Naive thymus-derived CD4-positive, alpha-beta T cell (primary cell): ENCODE measurements at regions of chr7 and their contacts with region 1.

Region 1: DNA sequence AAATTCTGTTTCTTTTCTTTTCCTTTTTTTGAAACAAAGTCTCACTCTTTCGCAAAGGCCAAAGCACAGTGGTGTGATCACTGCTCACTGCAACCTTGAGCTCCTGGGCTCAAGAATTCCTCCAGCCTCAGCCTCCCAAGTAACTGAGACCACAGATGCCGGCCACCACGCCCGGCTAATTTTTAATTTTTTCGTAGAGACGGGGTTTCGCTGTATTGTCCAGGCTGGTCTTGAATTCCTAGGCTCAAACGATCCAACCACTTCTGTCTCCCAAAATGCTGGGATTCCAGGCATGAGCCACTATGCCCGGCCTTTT is 25.7 kb upstream of the TRIM56 start:
- DNase-seq: no peak
- ATAC-seq: no peak
- H3K4me3 ChIP-seq: no peak overlapping the region
- H3K4me3 Mint-ChIP-seq: no peak overlapping the region
- H3K27ac ChIP-seq: no peak overlapping the region
- H3K27ac Mint-ChIP-seq: peak overlapping the region in 2 of 9 donors; percentile 11 to 52
- H3K4me1 ChIP-seq: no peaks in the 10 kb centered on the region
- H3K4me1 Mint-ChIP-seq: peaks cover 0 to 5% (median 0%) of the 10 kb centered on the region in 7 donors
- H3K27me3 ChIP-seq: no peaks in the 10 kb centered on the region
- H3K27me3 Mint-ChIP-seq: peaks cover 35 to 69% (median 62%) of the 10 kb centered on the region in 5 donors

Region 2: GRCh38 chr7:100799014-100799896 is 260.3 kb before region 1 on chr7:
- CTCF ChIA-PET with region 1: interaction called, 5 read pairs
- POLR2A ChIA-PET with region 1: no interaction called
- intact Hi-C with region 1: loop called in 1 of 2 experiments (anchors 1 kb)
- DNase-seq: peak in 8 of 9 donors; percentile 6 to 45 (median 36)
- ATAC-seq: peak; percentile 49
- H3K4me3 ChIP-seq: no peak overlapping the region
- H3K4me3 Mint-ChIP-seq: no peak overlapping the region
- H3K27ac ChIP-seq: no peak overlapping the region
- H3K27ac Mint-ChIP-seq: no peak overlapping the region
- H3K4me1 ChIP-seq: no peaks in the 10 kb centered on the region
- H3K4me1 Mint-ChIP-seq: peaks cover 0 to 17% (median 5%) of the 10 kb centered on the region in 7 donors
- H3K27me3 ChIP-seq: no peaks in the 10 kb centered on the region
- H3K27me3 Mint-ChIP-seq: peaks cover 2 to 30% (median 8%) of the 10 kb centered on the region in 5 donors

Region 3: DNA sequence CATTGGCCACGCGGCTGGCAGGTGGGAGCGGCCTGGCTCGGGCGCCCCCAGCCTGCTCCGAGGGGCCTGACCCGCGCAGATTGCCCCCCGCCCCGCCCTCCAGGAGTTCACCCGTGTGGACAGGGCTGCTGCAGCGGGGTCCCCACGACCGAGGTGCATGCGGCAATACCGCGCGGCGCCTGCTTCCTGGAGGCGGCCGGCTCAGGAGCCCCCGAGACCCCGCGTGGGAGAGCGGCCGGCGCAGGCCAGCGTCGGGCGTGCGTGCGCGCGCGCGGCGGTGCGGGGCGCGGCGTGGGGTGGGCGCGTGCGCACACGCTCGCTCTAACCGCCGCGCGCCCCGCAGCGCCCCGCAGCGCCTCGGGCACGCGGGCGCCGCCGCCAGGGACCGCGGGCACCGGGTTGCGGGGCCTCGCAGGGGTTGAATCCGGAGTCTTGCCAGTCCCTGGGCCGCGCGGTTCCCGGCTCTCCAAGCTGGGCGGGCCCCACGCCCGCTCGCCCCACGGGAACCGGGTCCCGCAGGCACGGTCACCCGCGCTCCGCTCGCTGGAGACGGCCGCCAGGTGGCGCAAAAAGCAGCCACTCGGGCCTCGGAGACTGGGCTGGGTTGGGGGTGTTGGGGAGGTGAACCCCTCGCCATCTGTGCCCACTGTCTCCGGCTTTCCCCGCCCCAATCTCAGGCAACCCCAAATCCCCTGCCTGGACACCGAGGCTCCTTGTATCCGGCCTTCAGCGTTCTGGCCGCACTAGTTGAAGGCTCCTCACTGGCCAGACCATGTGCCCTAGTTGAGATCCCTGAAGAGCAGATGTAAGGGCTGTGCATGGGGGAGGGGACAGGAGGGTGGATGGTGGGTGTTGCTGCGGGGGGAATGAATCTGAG is 162.6 kb before region 1 on chr7:
- CTCF ChIA-PET with region 1: interaction called, 7 read pairs
- POLR2A ChIA-PET with region 1: no interaction called
- intact Hi-C with region 1: loop called (anchors 1 kb)
- DNase-seq: peak in 8 of 9 donors; percentile 36 to 74 (median 52)
- ATAC-seq: peak; percentile 69
- H3K4me3 ChIP-seq: peak overlapping the region; percentile 28
- H3K4me3 Mint-ChIP-seq: peak overlapping the region; percentile 45 to 95 (median 82)
- H3K27ac ChIP-seq: no peak overlapping the region
- H3K27ac Mint-ChIP-seq: no peak overlapping the region
- H3K4me1 ChIP-seq: peaks cover 8 to 11% of the 10 kb centered on the region in 2 donors
- H3K4me1 Mint-ChIP-seq: peaks cover 0 to 13% (median 7%) of the 10 kb centered on the region in 7 donors
- H3K27me3 ChIP-seq: peaks cover 8 to 10% of the 10 kb centered on the region in 2 donors
- H3K27me3 Mint-ChIP-seq: peaks cover 39 to 51% (median 43%) of the 10 kb centered on the region in 5 donors

Region 4: DNA sequence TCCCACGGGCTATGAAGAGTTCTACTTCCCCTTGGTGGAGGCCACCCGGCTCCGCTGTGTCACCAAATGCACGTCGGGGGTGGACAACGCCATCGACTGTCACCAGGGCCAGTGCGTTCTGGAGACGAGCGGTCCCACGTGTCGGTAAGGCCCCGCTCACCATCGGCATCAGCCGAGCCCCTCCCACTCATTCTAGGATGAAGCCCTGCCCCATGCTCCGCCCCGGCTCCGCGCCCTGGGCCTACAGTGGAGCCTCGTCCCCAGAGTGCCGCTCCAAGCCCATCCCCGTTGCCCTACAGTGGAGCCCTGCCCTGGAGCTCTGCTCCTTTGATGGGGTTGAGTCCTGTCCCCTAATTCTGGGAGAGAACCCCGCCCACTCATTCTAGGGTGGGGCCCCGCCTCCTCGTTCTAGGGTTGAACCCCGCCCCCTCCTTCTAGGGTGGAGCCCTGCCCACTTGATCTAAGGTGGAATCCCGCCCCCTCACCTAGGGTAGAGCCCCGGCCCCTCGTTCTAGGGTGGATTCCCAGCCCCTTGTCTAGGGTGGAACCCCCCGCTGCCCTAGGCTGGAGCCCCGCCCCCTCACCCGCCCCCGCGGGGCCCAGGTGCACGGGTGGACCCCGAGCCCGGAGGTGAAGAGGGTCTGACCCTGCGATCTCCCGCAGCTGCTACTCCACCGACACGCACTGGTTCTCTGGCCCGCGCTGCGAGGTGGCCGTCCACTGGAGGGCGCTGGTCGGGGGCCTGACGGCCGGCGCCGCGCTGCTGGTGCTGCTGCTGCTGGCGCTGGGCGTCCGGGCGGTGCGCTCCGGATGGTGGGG is 93.7 kb before region 1 on chr7:
- CTCF ChIA-PET with region 1: no interaction called
- POLR2A ChIA-PET with region 1: no interaction called
- intact Hi-C with region 1: loop called (anchors 1 kb)
- DNase-seq: peak; percentile 21 to 88 (median 52)
- ATAC-seq: peak; percentile 73
- H3K4me3 ChIP-seq: peak overlapping the region; percentile 52
- H3K4me3 Mint-ChIP-seq: peak overlapping the region; percentile 71 to 89 (median 84)
- H3K27ac ChIP-seq: no peak overlapping the region
- H3K27ac Mint-ChIP-seq: peak overlapping the region in 1 of 9 donors; percentile 6
- H3K4me1 ChIP-seq: peaks cover 0 to 17% of the 10 kb centered on the region in 2 donors
- H3K4me1 Mint-ChIP-seq: peaks cover 9 to 24% (median 16%) of the 10 kb centered on the region in 7 donors
- H3K27me3 ChIP-seq: peaks cover 12 to 33% of the 10 kb centered on the region in 2 donors
- H3K27me3 Mint-ChIP-seq: peaks cover 42 to 65% (median 61%) of the 10 kb centered on the region in 5 donors

Region 5: DNA sequence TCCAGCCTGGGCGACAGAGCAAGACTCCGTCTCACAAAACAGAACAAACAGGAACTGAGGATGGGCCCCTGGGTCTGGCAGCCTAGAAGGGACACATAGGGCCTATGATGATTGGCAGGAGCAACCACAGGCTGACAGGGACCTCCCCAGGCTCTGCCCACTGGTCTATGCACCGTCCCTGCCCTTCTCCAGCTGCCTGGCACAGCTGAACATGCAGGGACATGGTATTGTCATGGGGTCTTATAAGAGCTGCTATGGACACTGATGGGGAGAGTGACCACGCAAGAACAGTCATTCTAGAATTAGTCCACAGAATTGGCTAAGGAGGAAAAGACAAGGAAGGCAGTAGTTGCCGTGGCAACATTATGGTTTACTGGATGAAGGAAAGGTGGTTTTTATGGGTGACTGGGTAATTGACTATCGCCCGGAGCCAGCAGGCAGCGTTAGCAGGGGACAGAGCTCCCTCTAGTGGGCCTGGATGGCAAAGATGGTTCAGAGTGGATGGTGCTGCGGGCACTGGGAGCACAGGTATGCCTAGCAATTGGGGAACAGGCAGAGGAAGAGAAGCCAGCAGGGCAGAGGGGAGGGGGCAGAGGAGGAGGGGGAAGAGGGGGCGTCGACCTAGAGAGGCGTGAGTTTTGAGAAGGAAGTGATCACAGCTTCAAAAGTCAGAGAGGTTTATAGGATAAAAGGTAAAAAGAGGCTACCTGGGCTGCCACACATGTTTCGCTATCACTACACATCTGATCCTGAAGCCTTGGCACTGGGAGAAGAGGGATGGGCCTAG is 17.9 kb after region 1 on chr7:
- CTCF ChIA-PET with region 1: interaction called, 4 read pairs
- POLR2A ChIA-PET with region 1: no interaction called
- intact Hi-C with region 1: loop called in 1 of 2 experiments (anchors 1 kb)
- DNase-seq: peak; percentile 66 to 83 (median 78)
- ATAC-seq: peak; percentile 99
- H3K4me3 ChIP-seq: no peak overlapping the region
- H3K4me3 Mint-ChIP-seq: peak overlapping the region in 1 of 10 donors; percentile 5
- H3K27ac ChIP-seq: no peak overlapping the region
- H3K27ac Mint-ChIP-seq: peak overlapping the region in 1 of 9 donors; percentile 4
- H3K4me1 ChIP-seq: no peaks in the 10 kb centered on the region
- H3K4me1 Mint-ChIP-seq: peaks cover 0 to 9% (median 6%) of the 10 kb centered on the region in 7 donors
- H3K27me3 ChIP-seq: no peaks in the 10 kb centered on the region
- H3K27me3 Mint-ChIP-seq: peaks cover 0 to 26% (median 7%) of the 10 kb centered on the region in 5 donors